IMR-90 (cell line): ENCODE measurements at regions of chr17 and their contacts with region 1.

Region 1: DNA sequence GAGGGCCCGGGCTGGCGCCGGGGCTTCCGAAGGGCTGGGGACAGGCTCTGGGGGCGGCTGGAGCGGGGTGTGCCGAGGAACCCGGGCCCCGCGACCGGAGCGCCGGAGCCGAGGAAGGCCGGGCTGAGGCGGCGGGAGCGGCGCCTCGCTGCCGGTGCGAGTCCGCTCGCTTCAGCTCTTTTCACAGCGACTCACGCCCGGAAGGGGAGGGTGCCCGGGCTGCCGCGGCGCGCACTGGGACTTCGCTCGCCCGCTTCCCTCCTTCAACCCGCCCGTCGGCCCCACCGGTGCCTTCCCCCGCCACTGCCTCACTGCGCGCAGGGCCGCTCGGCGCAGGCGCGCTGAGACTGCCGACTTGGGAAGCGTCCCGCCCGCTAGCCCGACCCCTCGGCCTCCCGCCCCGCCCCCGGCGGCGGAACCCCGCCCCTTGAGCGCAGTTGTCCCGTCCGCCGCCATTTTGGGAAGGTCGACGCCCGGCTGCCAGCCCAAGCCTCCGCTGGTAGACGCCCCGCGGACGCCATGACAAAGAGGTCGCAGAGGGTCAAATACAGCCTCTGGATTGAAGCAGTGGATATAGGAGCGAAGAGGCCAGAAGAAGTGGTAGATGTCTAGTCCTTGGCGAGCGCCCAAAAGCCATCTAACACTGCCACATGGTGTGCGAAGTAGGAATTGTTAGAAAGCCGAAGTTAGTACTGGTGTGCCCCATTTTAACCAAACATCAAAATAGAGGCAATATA is at the start of gene UBE2G1:
- DNase-seq: peak; percentile 95
- ATAC-seq: peak; percentile 92
- H3K4me3 ChIP-seq: peak within 1 kb of the TSS; percentile 71
- H3K27ac ChIP-seq: peak within 1 kb of the TSS; percentile 65
- H3K4me1 ChIP-seq: peaks cover 3% of the 10 kb centered on the region; the same call in 1 of the 2 replicates
- H3K27me3 ChIP-seq: no peaks in the 10 kb centered on the region
- CTCF ChIP-seq: 0 out of 2 replicates have a peak, but pooled peaks have one; percentile 12
- POLR2A ChIP-seq: peak; percentile 82
- RAD21 ChIP-seq: peak; percentile 28; the same call in 1 of the 2 replicates
- total RNA-seq, gene UBE2G1: 26.3 and 37.5 TPM in 2 replicates

Region 2: GRCh38 chr17:4229627-4230541 is 136.6 kb before region 1 on chr17:
- CTCF ChIA-PET with region 1: no interaction called
- POLR2A ChIA-PET with region 1: no interaction called
- dilution Hi-C with region 1: no loop called
- in situ Hi-C with region 1: no loop called
- intact Hi-C with region 1: loop called (anchors 5 kb)
- DNase-seq: peak; percentile 97
- ATAC-seq: peak; percentile 95
- H3K4me3 ChIP-seq: no peak overlapping the region
- H3K27ac ChIP-seq: peak overlapping the region; percentile 48; the same call in 1 of the 2 replicates
- H3K4me1 ChIP-seq: peaks cover 14% of the 10 kb centered on the region
- H3K27me3 ChIP-seq: no peaks in the 10 kb centered on the region
- CTCF ChIP-seq: no peak
- POLR2A ChIP-seq: no peak
- RAD21 ChIP-seq: 0 out of 2 replicates have a peak, but pooled peaks have one; percentile 3

Region 3: GRCh38 chr17:4276511-4276910 is 90.0 kb before region 1 on chr17:
- CTCF ChIA-PET with region 1: no interaction called
- POLR2A ChIA-PET with region 1: no interaction called
- dilution Hi-C with region 1: no loop called
- in situ Hi-C with region 1: no loop called
- intact Hi-C with region 1: no loop called
- DNase-seq: no peak
- ATAC-seq: no peak
- H3K4me3 ChIP-seq: no peak overlapping the region
- H3K27ac ChIP-seq: no peak overlapping the region
- H3K4me1 ChIP-seq: no peaks in the 10 kb centered on the region
- H3K27me3 ChIP-seq: no peaks in the 10 kb centered on the region
- CTCF ChIP-seq: no peak
- POLR2A ChIP-seq: no peak
- RAD21 ChIP-seq: no peak

Region 4: GRCh38 chr17:4658478-4659305 is 292.2 kb after region 1 on chr17:
- CTCF ChIA-PET with region 1: no interaction called
- POLR2A ChIA-PET with region 1: no interaction called
- dilution Hi-C with region 1: no loop called
- in situ Hi-C with region 1: no loop called
- intact Hi-C with region 1: no loop called
- DNase-seq: peak; percentile 86
- ATAC-seq: peak; percentile 94
- H3K4me3 ChIP-seq: no peak overlapping the region
- H3K27ac ChIP-seq: no peak overlapping the region
- H3K4me1 ChIP-seq: no peaks in the 10 kb centered on the region
- H3K27me3 ChIP-seq: peaks cover 9% of the 10 kb centered on the region
- CTCF ChIP-seq: no peak
- POLR2A ChIP-seq: no peak
- RAD21 ChIP-seq: 0 out of 2 replicates have a peak, but pooled peaks have one; percentile 3